Stomach (tissue), 19 donors: ENCODE measurements at regions of chr7 and their contacts with region 1.

Region 1: GRCh38 chr7:100132697-100133151 is 6.0 kb downstream of the MBLAC1 start:
- DNase-seq: peak; percentile 72 to 85
- H3K4me3 ChIP-seq: no peak overlapping the region
- H3K27ac ChIP-seq: no peak overlapping the region
- H3K4me1 ChIP-seq: peaks cover 20 to 41% (median 27%) of the 10 kb centered on the region in 4 donors
- H3K27me3 ChIP-seq: no peaks in the 10 kb centered on the region
- CTCF ChIP-seq: peak in 5 of 7 experiments; percentile 72 to 97 (median 82)
- EP300 ChIP-seq: no peak
- POLR2A ChIP-seq: no peak

Region 2: DNA sequence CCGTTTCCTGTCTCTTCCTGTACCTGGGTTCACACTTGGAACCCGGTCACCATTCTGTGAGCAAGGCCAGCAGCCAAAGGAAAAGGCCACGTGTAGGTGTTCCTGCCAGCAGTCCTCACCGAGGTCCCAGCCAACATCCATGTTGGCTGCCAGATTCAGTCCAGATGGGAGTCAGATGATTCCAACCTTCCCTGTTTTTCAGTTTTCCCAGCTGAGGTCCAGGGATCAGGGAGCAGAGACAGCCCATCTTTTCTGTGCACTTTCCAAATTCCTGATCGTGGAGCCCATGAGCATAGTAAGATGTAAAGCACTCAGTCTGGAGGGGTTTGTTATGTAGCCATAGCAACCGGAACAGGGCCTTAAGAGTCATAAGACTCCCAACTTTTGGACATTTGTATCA is 83.2 kb after region 1 on chr7:
- intact Hi-C with region 1: loop called (anchors 10 kb)
- DNase-seq: peak; percentile 44 to 84
- H3K4me3 ChIP-seq: no peak overlapping the region
- H3K27ac ChIP-seq: no peak overlapping the region
- H3K4me1 ChIP-seq: peaks cover 0 to 14% (median 4%) of the 10 kb centered on the region in 4 donors
- H3K27me3 ChIP-seq: no peaks in the 10 kb centered on the region
- CTCF ChIP-seq: no peak
- EP300 ChIP-seq: no peak
- POLR2A ChIP-seq: no peak